GM13977 (cell line): ENCODE measurements at regions of chr9 and their contacts with region 1.

Region 1: DNA sequence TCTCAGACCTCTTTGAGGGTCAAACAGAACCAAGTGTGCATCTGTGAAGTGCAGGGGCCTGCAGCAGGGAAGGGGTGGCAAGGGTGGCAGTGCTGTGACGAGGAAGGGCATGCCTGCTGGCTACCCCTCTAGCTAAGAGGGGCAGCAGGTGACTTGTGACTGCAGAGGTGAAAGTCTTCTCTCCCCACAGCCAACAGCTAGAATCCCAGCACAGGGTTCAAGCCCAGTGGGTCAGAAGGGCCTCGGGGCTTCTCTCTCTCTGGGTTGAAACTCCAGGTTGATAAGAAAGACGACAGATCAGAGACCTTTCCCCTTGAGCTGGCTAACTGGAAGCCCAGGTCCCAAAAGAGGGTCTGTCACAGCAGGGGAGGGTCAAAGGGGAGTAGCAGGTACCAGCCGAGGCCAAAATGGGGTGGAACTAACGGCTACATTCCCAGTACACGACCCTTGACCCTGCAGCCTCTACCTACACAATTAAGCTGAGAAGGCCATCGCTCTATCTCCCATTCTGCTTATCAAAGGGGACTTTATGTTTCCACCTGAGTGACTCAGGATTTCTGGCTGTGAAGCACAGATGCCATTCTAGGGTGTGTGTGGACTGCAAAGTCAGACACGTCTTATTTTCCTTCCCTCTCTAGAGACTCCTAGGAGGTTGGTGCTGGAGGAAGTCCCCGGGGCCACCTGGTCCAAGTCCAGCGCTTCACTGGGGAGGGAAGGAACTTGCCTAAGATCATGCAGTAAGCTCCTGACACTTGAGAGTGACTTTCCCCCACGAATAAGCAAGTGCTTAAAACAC is 14.6 kb downstream of the ANKS6 start:
- DNase-seq: no peak
- CTCF ChIP-seq: no peak

Region 2: DNA sequence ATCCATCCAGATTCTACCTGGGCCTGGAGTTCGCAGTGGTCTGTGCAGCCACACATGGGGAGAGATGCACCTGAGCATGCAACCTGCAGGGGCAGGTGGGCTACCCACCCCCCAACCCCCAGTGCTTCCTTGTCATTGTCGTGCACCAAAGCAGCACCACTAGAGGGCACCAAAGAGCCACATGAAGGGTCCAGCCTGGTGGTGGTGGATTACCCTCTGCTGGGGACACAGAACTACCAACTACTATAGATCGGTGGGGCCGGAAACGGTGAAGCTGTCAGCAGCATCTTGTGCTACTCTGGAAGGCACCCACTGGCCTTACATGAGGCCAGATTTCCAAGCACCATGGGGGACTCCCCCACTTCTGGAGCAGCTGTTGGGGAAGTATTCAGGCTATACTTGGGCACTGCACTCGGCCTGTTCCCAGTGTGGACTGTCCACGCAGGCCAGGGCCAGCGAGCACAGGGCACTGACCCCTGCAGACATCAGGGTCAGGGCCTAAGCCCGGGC is 466.2 kb before region 1 on chr9:
- in situ Hi-C with region 1: loop called (anchors 10 kb)
- DNase-seq: peak; percentile 88
- CTCF ChIP-seq: peak; percentile 86

Region 3: GRCh38 chr9:98665501-98665900 is 116.3 kb before region 1 on chr9:
- in situ Hi-C with region 1: no loop called
- DNase-seq: no peak
- CTCF ChIP-seq: no peak

Region 4: GRCh38 chr9:98848450-98849149 is 66.8 kb after region 1 on chr9:
- in situ Hi-C with region 1: no loop called
- DNase-seq: peak; percentile 78
- CTCF ChIP-seq: peak; percentile 95

Region 5: GRCh38 chr9:98899408-98900056 is 117.7 kb after region 1 on chr9:
- in situ Hi-C with region 1: no loop called
- DNase-seq: no peak
- CTCF ChIP-seq: no peak

Region 6: GRCh38 chr9:99419070-99419469 is 637.3 kb after region 1 on chr9:
- in situ Hi-C with region 1: no loop called
- DNase-seq: no peak
- CTCF ChIP-seq: no peak